B cell (primary cell): ENCODE measurements at regions of chr10 and their contacts with region 1.

Region 1: GRCh38 chr10:62437696-62438095 is 63.5 kb downstream of the ZNF365 start:
- DNase-seq: peak; percentile 81
- ATAC-seq: peak; percentile 78
- H3K4me3 ChIP-seq: no peak overlapping the region
- H3K4me3 Mint-ChIP-seq: no peak overlapping the region
- H3K27ac ChIP-seq: no peak overlapping the region
- H3K27ac Mint-ChIP-seq: no peak overlapping the region
- H3K4me1 ChIP-seq: no peaks in the 10 kb centered on the region
- H3K4me1 Mint-ChIP-seq: peaks cover 3% of the 10 kb centered on the region
- H3K27me3 ChIP-seq: peaks cover 0 to 7% (median 2%) of the 10 kb centered on the region in 4 experiments
- H3K27me3 Mint-ChIP-seq: peaks cover 10% of the 10 kb centered on the region
- CTCF ChIP-seq: peak; percentile 93

Region 2: GRCh38 chr10:62456611-62457101 is 19.0 kb after region 1 on chr10:
- CTCF ChIA-PET with region 1: interaction called, 81 read pairs
- POLR2A ChIA-PET with region 1: no interaction called
- intact Hi-C with region 1: loop called (anchors 2 kb)
- DNase-seq: peak; percentile 85
- ATAC-seq: peak; percentile 93
- H3K4me3 ChIP-seq: no peak overlapping the region
- H3K4me3 Mint-ChIP-seq: peak overlapping the region; percentile 63
- H3K27ac ChIP-seq: peak overlapping the region in 1 of 2 donors; percentile 1
- H3K27ac Mint-ChIP-seq: peak overlapping the region; percentile 86
- H3K4me1 ChIP-seq: peaks cover 30 to 33% of the 10 kb centered on the region in 2 donors
- H3K4me1 Mint-ChIP-seq: peaks cover 34% of the 10 kb centered on the region
- H3K27me3 ChIP-seq: no peaks in the 10 kb centered on the region
- H3K27me3 Mint-ChIP-seq: no peaks in the 10 kb centered on the region
- CTCF ChIP-seq: no peak

Region 3: DNA sequence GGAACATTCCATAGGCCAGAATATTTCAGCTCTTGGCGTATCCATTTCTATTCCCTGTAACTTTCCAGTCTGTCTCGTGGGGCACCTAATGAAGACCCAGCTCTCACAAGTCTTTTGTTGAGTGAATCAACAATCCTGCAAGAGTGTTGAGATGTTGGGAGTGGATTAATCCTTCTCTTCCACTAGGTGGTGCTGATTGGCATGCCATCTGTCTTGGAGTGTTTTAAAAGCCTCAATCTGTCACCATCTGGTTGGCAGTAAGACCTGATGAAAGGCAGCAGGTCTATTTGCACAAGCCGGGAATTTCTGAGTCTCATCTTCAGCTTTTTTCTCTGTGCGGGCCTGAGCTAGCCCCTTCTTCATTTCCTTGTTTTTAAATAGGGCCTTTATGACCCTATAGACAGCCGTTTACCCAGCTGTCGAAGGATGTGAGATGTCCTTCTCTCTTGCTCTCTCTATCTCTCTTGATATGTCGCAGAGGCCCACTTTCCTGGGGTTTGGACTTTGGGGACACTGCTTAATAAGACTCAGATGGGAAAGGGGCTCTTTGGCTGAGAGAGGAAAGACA is 117.0 kb after region 1 on chr10:
- CTCF ChIA-PET with region 1: interaction called, 11 read pairs
- POLR2A ChIA-PET with region 1: no interaction called
- intact Hi-C with region 1: no loop called
- DNase-seq: peak; percentile 36
- ATAC-seq: peak; percentile 43
- H3K4me3 ChIP-seq: no peak overlapping the region
- H3K4me3 Mint-ChIP-seq: no peak overlapping the region
- H3K27ac ChIP-seq: no peak overlapping the region
- H3K27ac Mint-ChIP-seq: no peak overlapping the region
- H3K4me1 ChIP-seq: peaks cover 0 to 6% of the 10 kb centered on the region in 2 donors
- H3K4me1 Mint-ChIP-seq: peaks cover 9% of the 10 kb centered on the region
- H3K27me3 ChIP-seq: no peaks in the 10 kb centered on the region
- H3K27me3 Mint-ChIP-seq: peaks cover 9% of the 10 kb centered on the region
- CTCF ChIP-seq: peak; percentile 53

Region 4: DNA sequence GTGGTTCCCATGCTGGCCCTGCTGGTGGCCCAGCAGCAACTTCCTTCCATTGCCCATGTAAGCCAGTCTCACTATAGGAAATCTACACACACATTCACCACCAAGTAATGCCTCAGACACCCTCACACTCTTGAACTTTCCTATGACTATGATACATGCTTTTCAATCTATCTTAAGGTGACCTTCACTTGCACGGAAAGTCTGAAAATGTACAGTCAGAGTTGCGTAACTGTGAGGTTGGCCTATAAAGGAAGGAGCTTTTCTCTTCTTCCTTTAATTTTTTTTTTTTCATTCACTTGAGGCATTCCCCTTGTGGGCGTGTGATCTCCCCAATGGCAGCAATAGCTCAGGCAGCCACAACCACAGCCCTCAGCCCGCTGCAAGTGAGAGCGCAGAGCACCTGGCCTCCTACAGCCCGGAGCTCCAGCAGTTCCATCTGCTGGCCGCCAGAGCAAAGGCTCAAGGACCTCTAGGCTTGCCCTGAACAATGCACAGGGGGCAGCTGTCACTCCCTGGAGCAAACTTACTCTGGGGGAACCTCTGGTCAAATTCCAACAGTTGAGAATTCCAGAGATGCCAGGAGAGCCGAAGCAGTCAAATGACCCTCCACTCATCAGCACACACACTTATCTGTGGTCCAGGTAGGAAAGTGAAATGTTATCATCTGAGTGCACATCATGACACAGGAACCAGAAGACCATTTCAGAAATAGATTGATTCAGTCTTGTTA is 243.7 kb after region 1 on chr10:
- CTCF ChIA-PET with region 1: interaction called, 10 read pairs
- POLR2A ChIA-PET with region 1: no interaction called
- intact Hi-C with region 1: no loop called
- DNase-seq: peak; percentile 82
- ATAC-seq: peak; percentile 97
- H3K4me3 ChIP-seq: no peak overlapping the region
- H3K4me3 Mint-ChIP-seq: peak overlapping the region; percentile 21
- H3K27ac ChIP-seq: no peak overlapping the region
- H3K27ac Mint-ChIP-seq: peak overlapping the region; percentile 51
- H3K4me1 ChIP-seq: peaks cover 14 to 17% of the 10 kb centered on the region in 2 donors
- H3K4me1 Mint-ChIP-seq: peaks cover 16% of the 10 kb centered on the region
- H3K27me3 ChIP-seq: no peaks in the 10 kb centered on the region
- H3K27me3 Mint-ChIP-seq: peaks cover 4% of the 10 kb centered on the region
- CTCF ChIP-seq: peak; percentile 53

Region 5: DNA sequence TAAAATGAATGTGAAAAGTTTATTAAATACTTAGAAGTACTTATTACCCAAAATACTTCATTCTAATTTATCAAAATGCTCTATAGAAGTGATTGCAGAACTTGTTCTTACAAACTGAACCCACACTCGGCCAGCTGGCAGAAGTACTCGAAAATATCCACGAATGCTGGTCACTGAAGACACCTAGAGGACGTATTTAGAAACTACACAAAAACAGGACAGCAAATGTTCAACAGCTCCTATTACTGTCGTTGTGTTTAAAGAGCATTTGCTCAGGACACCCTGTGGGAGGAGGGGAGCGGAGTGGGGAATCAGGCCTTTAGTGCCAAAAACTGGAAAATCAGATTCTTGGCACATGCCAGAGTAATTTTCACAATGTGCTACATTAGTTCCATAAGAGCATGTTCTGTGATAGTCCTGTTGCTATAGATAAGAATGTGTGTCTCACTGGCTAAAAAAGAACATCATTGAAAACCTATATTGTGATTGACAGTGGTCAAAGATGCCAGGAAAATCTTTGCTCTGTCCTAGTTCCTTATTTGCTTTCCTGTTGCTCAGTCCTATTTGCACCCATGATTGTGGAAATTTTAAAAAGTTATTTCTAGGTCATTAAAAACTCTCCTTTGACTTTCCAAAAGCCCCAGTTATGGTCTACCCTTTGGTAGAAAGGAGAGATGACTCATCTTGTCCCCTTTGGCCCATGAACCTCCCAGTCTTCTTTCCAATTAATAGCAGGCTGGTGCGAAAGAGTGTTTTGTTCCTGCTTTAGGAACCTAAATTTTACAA is 646.4 kb after region 1 on chr10:
- CTCF ChIA-PET with region 1: interaction called, 50 read pairs
- POLR2A ChIA-PET with region 1: no interaction called
- intact Hi-C with region 1: loop called (anchors 1 kb)
- DNase-seq: peak; percentile 75
- ATAC-seq: peak; percentile 86
- H3K4me3 ChIP-seq: no peak overlapping the region
- H3K4me3 Mint-ChIP-seq: no peak overlapping the region
- H3K27ac ChIP-seq: no peak overlapping the region
- H3K27ac Mint-ChIP-seq: no peak overlapping the region
- H3K4me1 ChIP-seq: no peaks in the 10 kb centered on the region
- H3K4me1 Mint-ChIP-seq: no peaks in the 10 kb centered on the region
- H3K27me3 ChIP-seq: no peaks in the 10 kb centered on the region
- H3K27me3 Mint-ChIP-seq: peaks cover 10% of the 10 kb centered on the region
- CTCF ChIP-seq: peak; percentile 82